Activated CD4-positive, alpha-beta memory T cell treated with anti-CD3 and anti-CD28 coated beads for 36 hours (primary cell): ENCODE measurements at regions of chr9 and their contacts with region 1.

Region 1: DNA sequence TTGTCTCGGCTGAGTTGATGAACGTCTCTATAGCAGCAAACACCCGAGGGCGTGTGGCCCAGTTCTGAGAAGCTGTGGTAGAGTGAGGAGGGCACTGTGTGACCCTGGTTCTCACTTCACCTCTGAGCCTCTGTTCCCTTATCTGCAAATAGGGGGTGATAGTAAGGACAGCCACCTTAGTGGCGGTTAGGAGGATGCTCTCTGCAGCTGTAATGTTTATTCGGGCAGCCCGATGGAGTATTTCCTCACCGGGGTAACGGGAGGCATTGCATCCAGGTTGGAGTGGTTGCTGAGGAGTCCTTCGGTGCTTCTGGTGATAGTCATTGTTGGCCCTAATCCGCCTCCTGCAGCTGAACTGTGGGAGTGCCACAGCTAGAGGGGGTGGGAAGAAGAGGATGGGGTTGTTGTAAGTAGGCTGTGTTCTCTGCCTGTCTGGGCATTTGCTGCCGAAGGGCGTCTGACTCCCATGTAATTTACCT is 13.9 kb downstream of the PRRC2B start:
- DNase-seq: peak; percentile 53
- H3K4me3 Mint-ChIP-seq: peak overlapping the region; percentile 54
- H3K27ac Mint-ChIP-seq: peak overlapping the region; percentile 65
- H3K4me1 Mint-ChIP-seq: peaks cover 89% of the 10 kb centered on the region
- H3K27me3 Mint-ChIP-seq: no peaks in the 10 kb centered on the region

Region 2: DNA sequence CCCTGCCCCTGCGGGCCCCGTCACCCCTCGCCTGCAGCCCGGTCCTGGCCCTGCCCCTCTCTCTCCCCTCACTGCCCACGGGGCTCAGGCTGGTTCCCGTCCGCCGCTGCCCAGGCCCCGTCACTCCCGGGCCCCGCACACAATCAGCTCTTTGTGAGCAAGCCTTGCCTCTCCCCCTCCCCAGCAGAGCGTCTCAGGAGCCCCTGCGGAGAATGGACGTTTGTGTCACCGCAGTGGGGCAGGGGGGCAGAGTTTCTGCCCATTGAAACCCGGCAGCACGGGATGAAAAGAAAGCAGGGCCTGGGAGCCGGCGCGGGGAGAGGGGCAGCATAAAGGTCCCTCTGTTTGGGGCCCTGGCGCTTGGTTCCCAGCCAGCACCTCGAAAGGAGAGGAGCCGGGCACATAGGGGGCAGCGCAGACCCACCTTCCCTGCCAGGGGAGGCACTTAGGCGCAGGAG is 295.9 kb before region 1 on chr9:
- CTCF ChIA-PET with region 1: no interaction called
- POLR2A ChIA-PET with region 1: no interaction called
- intact Hi-C with region 1: no loop called
- DNase-seq: no peak
- H3K4me3 Mint-ChIP-seq: no peak overlapping the region
- H3K27ac Mint-ChIP-seq: no peak overlapping the region
- H3K4me1 Mint-ChIP-seq: no peaks in the 10 kb centered on the region
- H3K27me3 Mint-ChIP-seq: peaks cover 4% of the 10 kb centered on the region

Region 3: DNA sequence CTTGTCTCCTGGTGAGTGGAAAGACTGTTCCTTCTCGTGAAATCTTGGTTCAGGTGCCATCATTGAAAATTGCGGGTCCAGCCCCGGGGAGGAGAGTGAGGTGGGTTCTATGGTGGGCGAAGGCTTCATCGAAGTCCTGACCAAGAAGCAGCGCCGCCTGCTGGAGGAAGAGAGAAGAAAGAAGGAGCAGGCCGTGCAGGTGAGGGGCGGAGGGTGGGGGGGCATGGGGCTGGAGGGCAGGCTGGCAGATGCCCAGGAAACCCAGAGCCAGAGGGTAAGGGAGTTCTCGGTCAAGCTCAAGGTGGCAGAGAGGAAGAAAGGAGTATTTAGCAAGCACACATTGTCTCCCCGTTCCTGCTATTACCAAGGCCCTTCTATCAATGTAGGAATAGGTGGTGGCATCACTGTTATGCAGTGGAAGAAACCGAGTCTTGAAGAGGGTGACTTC is 70.7 kb after region 1 on chr9:
- CTCF ChIA-PET with region 1: interaction called, 10 read pairs
- POLR2A ChIA-PET with region 1: no interaction called
- intact Hi-C with region 1: no loop called
- DNase-seq: peak; percentile 69
- H3K4me3 Mint-ChIP-seq: no peak overlapping the region
- H3K27ac Mint-ChIP-seq: no peak overlapping the region
- H3K4me1 Mint-ChIP-seq: peaks cover 11% of the 10 kb centered on the region
- H3K27me3 Mint-ChIP-seq: no peaks in the 10 kb centered on the region

Region 4: GRCh38 chr9:132094314-132094791 is 686.6 kb after region 1 on chr9:
- CTCF ChIA-PET with region 1: no interaction called
- POLR2A ChIA-PET with region 1: no interaction called
- intact Hi-C with region 1: no loop called
- DNase-seq: no peak
- H3K4me3 Mint-ChIP-seq: no peak overlapping the region
- H3K27ac Mint-ChIP-seq: no peak overlapping the region
- H3K4me1 Mint-ChIP-seq: peaks cover 3% of the 10 kb centered on the region
- H3K27me3 Mint-ChIP-seq: peaks cover 41% of the 10 kb centered on the region